K562 (cell line): ENCODE measurements at regions of chrX and their contacts with region 1.

Region 1: DNA sequence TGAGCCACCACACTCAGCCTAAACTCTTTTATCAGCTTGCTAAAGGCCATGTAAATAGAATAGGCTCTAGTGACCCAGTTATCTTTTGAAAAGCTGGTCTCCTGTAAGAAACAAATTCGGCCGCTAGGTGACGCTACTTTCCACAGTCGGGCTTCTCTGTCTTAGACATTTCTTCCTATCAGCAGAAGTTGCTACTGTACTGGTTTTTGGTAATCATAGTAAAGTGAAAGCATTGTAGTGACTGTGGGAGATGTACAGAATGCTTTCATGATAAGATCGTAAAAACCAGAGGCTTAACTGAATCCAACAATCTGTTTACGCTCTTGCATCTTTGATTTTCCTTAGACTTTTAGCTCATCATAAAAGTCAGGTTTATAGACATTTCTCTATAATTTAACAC is 82.6 kb downstream of the GK start:
- DNase-seq: peak; percentile 44 to 76 (median 46)
- ATAC-seq: peak; percentile 91
- H3K4me3 ChIP-seq: no peak overlapping the region
- H3K27ac ChIP-seq: no peak overlapping the region
- H3K4me1 ChIP-seq: no peaks in the 10 kb centered on the region
- H3K27me3 ChIP-seq: no peaks in the 10 kb centered on the region
- CTCF ChIP-seq: peak; percentile 65 to 86 (median 78)
- EP300 ChIP-seq: no peak
- POLR2A ChIP-seq: no peak
- RAD21 ChIP-seq: peak; percentile 53 to 80

Region 2: GRCh38 chrX:30561191-30561590 is 174.6 kb before region 1 on chrX:
- CTCF ChIA-PET with region 1: no interaction called
- POLR2A ChIA-PET with region 1: no interaction called
- in situ Hi-C with region 1: no loop called
- intact Hi-C with region 1: no loop called
- DNase-seq: no peak
- ATAC-seq: no peak
- H3K4me3 ChIP-seq: no peak overlapping the region
- H3K27ac ChIP-seq: no peak overlapping the region
- H3K4me1 ChIP-seq: no peaks in the 10 kb centered on the region
- H3K27me3 ChIP-seq: no peaks in the 10 kb centered on the region
- CTCF ChIP-seq: no peak
- EP300 ChIP-seq: no peak
- POLR2A ChIP-seq: no peak
- RAD21 ChIP-seq: no peak

Region 3: DNA sequence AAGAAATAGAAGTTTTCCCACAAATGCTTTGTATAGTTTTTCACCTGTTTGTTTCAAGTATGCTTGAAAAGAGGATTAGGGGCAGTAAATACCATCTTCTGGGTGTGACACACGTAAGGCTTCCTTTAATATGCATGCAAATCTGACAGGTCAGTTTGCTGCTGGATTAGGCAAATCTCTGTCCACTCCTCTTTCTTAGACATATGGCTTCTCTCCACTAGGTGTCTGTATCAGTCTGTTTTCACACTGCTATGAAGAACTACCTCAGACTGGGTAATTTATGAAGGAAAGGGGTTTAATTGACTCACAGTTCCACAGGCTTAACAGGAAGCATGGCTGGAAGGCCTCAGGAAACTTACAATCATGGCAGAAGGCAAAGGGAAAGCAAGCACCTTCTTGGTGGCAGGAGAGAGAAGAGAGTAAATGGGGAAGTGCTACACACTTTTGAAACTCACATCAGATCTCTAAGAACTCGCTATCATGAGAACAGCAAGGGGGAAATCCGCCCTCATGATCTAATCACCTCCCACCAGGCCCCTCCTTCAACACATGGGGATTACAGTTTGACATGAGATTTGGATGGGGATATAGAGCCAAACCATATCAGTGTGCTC is 86.3 kb after region 1 on chrX:
- CTCF ChIA-PET with region 1: no interaction called
- POLR2A ChIA-PET with region 1: no interaction called
- in situ Hi-C with region 1: no loop called
- intact Hi-C with region 1: loop called (anchors 2 kb)
- DNase-seq: peak in 2 of 4 experiments; percentile 4 to 8
- ATAC-seq: peak; percentile 84
- H3K4me3 ChIP-seq: no peak overlapping the region
- H3K27ac ChIP-seq: no peak overlapping the region
- H3K4me1 ChIP-seq: no peaks in the 10 kb centered on the region
- H3K27me3 ChIP-seq: no peaks in the 10 kb centered on the region; a peak in 1 of 5 replicates
- CTCF ChIP-seq: peak in 2 of 3 experiments; percentile 12 to 28; a peak in 2 of 6 replicates
- EP300 ChIP-seq: no peak
- POLR2A ChIP-seq: no peak
- RAD21 ChIP-seq: peak in 1 of 2 experiments; percentile 39; a peak in 2 of 4 replicates

Region 4: GRCh38 chrX:30865015-30865414 is 129.2 kb after region 1 on chrX:
- CTCF ChIA-PET with region 1: no interaction called
- POLR2A ChIA-PET with region 1: no interaction called
- in situ Hi-C with region 1: no loop called
- intact Hi-C with region 1: loop called (anchors 5 kb)
- DNase-seq: peak; percentile 23 to 55 (median 28)
- ATAC-seq: peak; percentile 97
- H3K4me3 ChIP-seq: no peak overlapping the region
- H3K27ac ChIP-seq: no peak overlapping the region
- H3K4me1 ChIP-seq: no peaks in the 10 kb centered on the region; a peak in 1 of 5 replicates
- H3K27me3 ChIP-seq: no peaks in the 10 kb centered on the region
- CTCF ChIP-seq: peak; percentile 50 to 58 (median 56)
- EP300 ChIP-seq: no peak
- POLR2A ChIP-seq: no peak
- RAD21 ChIP-seq: peak in 1 of 2 experiments; percentile 28; a peak in 2 of 4 replicates